Body of pancreas (tissue), 4 donors: ENCODE measurements at regions of chr15 and their contacts with region 1.

Region 1: GRCh38 chr15:41928637-41929620 is 35.1 kb upstream of the SPTBN5 start:
- DNase-seq: peak in 1 of 4 donors; percentile 56
- ATAC-seq: peak; percentile 22
- H3K4me3 ChIP-seq: no peak overlapping the region
- H3K27ac ChIP-seq: peak overlapping the region; percentile 9 to 68 (median 60)
- H3K4me1 ChIP-seq: peaks cover 62% of the 10 kb centered on the region
- H3K27me3 ChIP-seq: no peaks in the 10 kb centered on the region
- CTCF ChIP-seq: no peak
- POLR2A ChIP-seq: no peak

Region 2: DNA sequence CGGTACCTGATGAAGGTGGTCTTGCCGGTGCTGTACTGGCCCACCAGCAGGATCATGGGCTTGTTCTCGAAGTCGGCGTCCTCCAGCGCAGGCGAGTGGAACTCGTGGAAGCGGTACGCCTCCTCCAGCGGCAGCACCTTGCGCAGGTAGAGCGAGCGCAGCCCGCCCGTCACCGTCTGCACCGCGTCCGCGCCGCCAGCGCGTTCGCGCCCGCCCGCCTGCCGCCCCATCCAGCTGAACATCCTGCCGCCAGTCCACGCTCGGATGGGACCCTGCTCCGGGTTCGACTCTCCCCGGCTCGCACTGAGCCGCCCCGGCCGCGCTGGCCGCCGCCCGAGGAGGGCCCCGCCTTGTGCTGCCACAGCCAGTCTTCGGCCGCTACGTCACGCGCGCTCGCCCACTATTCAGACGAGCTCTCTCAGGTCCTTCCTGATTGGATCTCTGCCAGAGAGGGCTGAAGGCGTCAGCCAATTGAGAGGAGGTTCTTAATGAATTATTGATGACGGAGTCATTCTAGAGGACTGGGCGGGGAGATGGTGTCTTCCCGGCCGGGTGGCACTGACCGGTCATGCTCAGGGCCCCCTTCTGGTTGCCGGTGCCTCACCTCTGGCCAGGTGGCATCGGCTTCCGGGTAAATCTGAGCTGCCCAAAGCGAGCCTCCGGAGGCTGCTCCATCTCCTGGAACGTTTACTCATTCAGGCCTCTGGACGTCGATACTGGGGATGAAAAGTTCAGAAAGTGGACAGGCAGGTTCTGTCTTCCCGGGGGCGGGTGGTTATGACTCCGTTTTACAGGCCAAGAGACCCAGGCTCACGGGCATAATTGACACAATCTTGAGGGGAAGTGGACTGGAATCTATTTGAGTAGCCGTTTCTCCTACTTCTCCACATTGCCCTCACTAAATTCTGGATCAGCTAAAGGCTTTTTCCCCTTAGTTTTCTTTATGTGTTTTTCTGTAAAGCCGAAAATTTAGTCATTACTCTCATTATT is 43.6 kb after region 1 on chr15 and contains the start of gene EHD4:
- intact Hi-C with region 1: loop called (anchors 10 kb)
- DNase-seq: peak; percentile 98 to 100 (median 100)
- ATAC-seq: peak; percentile 94
- H3K4me3 ChIP-seq: peak within 1 kb of the TSS; percentile 63 to 68
- H3K27ac ChIP-seq: peak within 1 kb of the TSS; percentile 93 to 99 (median 98)
- H3K4me1 ChIP-seq: peaks cover 33% of the 10 kb centered on the region
- H3K27me3 ChIP-seq: no peaks in the 10 kb centered on the region
- CTCF ChIP-seq: peak in 6 of 7 experiments; percentile 11 to 63 (median 56)
- POLR2A ChIP-seq: peak; percentile 85 to 94 (median 91)
- total RNA-seq, gene EHD4: 13.8 to 16.9 TPM

Region 3: DNA sequence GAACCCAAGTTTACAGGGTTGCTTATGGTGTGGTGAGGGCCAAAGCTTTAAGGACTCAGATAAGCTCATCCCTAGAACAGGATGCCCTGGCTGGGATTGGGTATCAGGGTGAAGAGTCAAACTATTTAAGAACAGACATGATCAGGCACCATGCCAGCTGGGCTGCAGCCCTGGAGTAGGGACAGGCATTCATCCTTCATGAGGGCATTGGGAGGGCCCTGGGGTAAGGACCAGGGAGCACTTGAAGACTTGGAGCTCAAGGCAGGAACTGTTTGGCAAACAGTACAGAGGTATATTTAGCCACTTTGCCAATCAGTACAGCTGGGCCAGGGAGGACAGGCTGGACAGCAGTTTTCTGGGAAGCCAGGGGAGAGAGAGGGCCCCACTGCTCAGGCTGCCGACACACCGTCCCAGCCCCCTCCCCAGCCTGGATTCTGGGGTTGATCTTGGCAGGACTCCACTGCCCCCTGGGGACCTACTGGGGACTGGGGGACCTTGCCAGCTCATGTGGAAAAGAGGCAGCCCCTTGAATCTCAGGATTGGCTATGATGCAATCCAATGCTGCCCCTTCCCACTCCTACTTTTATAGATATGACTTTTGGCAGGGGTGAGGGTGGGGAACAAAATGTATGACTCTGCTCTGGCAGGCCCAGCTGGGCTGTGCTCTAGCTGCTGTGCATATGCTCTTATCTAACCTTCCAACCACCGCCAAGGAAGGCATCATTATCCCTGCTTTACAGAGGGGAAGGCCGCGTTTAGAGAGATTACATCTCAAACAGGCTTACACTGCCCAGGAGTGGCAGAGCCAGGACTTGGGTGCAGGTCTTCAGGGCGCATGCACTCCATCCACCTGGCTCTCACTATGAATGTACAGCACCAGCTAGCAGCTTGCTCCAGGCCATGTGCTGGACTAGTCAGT is 89.6 kb after region 1 on chr15:
- intact Hi-C with region 1: no loop called
- DNase-seq: no peak
- ATAC-seq: no peak
- H3K4me3 ChIP-seq: no peak overlapping the region
- H3K27ac ChIP-seq: no peak overlapping the region
- H3K4me1 ChIP-seq: no peaks in the 10 kb centered on the region
- H3K27me3 ChIP-seq: no peaks in the 10 kb centered on the region
- CTCF ChIP-seq: no peak
- POLR2A ChIP-seq: no peak